Aorta (tissue), 5 donors: ENCODE measurements at regions of chr2 and their contacts with region 1.

Region 1: DNA sequence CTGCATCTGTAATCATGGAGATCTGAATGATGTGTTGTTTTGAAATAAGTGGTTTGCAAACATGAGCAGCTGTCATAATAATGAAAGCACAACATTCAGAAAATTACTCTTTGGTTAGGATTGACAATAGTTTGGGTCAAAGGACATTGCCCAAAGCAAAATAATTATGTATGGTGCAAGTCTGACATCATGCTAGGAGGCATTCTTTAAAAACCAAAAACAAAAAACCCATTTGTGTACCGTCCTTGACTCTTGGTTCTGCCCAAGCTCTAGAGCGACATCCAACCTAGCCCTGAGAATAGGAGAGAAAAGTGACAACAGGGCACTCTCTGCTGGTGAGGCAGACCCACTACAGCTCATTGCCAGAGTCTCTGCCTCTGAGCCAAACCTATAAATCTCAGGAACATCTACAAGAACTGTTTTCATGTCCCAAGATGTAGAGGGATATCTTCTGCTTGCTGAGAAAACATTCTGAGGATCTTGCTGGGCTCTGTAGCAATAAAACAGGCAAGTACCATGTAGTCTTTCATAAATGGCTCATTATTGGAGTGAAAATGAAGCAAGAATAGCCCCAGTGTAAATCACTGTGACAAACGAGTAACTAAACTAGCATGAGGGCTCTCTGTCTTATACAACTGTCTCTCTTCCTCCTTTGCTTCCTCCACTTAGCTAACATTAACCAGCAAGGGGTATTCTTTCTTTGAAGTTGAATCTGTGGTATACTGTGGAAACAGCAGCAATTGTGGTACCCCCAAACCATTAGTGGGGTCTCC is 266.8 kb upstream of the CXCR4 start:
- DNase-seq: no peak
- ATAC-seq: peak; percentile 42
- H3K4me3 ChIP-seq: no peak overlapping the region
- H3K27ac ChIP-seq: no peak overlapping the region
- H3K4me1 ChIP-seq: no peaks in the 10 kb centered on the region
- H3K27me3 ChIP-seq: no peaks in the 10 kb centered on the region

Region 2: DNA sequence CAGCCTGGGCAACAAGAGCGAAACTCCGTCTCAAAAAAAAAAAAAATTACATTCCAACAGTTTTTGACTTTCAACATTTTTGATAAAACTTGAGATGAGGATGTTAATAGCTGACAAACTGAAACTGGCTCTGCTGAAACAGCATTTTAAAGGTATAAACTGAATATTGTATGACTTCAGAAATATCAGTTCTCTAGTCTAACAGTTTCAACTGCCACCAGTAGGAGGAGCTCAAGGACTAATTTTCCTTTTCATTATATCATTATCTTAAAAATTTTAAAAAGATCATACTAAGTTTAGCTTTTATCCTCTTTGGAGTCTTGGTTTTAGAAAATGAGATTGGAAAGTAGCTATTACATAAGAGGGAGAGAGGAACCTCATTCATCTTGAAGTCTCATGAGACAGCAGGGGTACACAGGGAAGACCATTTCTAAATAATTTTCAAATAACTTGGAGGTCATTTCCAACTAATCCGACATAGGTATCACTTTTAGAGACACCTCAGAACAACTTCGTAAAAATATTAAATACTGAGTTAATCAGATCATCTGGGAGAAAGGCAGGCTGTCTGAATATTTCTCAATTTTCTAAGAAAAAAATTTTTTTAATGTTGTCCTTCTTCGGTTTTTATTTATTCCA is 470.9 kb before region 1 on chr2:
- intact Hi-C with region 1: loop called in 1 of 2 experiments (anchors 10 kb)
- DNase-seq: no peak
- ATAC-seq: no peak
- H3K4me3 ChIP-seq: no peak overlapping the region
- H3K27ac ChIP-seq: no peak overlapping the region
- H3K4me1 ChIP-seq: no peaks in the 10 kb centered on the region
- H3K27me3 ChIP-seq: no peaks in the 10 kb centered on the region

Region 3: GRCh38 chr2:136212423-136213378 is 172.0 kb before region 1 on chr2:
- intact Hi-C with region 1: no loop called
- DNase-seq: no peak
- ATAC-seq: no peak
- H3K4me3 ChIP-seq: no peak overlapping the region
- H3K27ac ChIP-seq: no peak overlapping the region
- H3K4me1 ChIP-seq: no peaks in the 10 kb centered on the region
- H3K27me3 ChIP-seq: no peaks in the 10 kb centered on the region